ENCODE measurements at regions of chr12 and their contacts with region 1.

Region 1: GRCh38 chr12:81644503-81644902 is 114.6 kb downstream of the PPFIA2 start:
- DNase-seq: no peak
- ATAC-seq: peak; percentile 73
- H3K4me3 ChIP-seq: no peak overlapping the region
- H3K27ac ChIP-seq: no peak overlapping the region
- H3K4me1 ChIP-seq: no peaks in the 10 kb centered on the region
- H3K27me3 ChIP-seq: no peaks in the 10 kb centered on the region

Region 2: DNA sequence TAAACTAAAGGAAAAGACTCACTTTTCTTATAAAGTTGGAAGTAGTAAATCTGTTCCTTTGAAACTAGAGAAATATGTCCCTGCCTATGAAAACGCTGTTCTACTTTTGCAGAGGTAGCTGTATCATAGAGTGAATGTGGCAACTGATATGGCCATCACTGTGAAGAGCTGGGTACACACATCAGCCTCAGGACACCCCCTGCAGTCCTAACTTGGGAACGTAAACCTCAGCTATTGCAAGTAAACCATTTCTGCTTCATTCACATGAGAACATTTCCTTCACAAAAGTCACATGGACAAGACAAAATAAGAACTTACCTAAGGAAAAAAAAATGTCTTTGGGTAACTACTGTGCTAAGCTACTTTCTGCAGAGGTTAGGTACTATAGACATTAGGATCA is 348.0 kb after region 1 on chr12:
- intact Hi-C with region 1: loop called in 1 of 2 experiments (anchors 5 kb)
- DNase-seq: no peak
- ATAC-seq: no peak
- H3K4me3 ChIP-seq: no peak overlapping the region
- H3K27ac ChIP-seq: no peak overlapping the region
- H3K4me1 ChIP-seq: no peaks in the 10 kb centered on the region
- H3K27me3 ChIP-seq: no peaks in the 10 kb centered on the region

Region 3: GRCh38 chr12:82027612-82028011 is 383.1 kb after region 1 on chr12:
- intact Hi-C with region 1: loop called in 1 of 2 experiments (anchors 10 kb)
- DNase-seq: no peak
- ATAC-seq: no peak
- H3K4me3 ChIP-seq: no peak overlapping the region
- H3K27ac ChIP-seq: no peak overlapping the region
- H3K4me1 ChIP-seq: no peaks in the 10 kb centered on the region
- H3K27me3 ChIP-seq: no peaks in the 10 kb centered on the region

Region 4: DNA sequence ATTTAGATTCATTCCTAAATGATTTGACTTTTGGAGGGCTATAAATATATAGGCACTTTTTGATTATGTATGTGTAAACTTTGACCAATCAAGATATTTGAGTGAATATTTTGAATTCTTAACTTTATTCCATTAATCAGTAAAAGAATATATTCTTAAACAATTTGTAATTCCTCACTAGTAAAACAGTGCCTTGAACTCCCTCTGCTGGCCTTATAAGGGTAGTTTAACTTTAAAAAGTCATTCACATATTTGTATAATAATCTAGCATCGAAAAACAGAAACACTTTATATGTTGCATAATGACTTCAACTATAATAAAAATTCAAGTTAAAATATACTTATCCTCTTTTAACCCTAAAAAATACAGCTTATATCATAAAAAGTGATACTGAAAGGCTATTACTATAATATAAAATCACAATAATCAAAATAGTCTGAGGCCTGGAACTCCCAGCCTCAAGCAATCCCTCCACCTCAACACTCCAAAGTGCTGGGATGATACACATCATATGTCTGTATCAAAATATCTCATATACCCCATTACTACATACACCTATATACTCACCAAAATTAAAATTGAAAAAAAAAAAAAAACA is 682.5 kb after region 1 on chr12:
- intact Hi-C with region 1: loop called (anchors 2 to 5 kb)
- DNase-seq: no peak
- ATAC-seq: no peak
- H3K4me3 ChIP-seq: no peak overlapping the region
- H3K27ac ChIP-seq: no peak overlapping the region
- H3K4me1 ChIP-seq: no peaks in the 10 kb centered on the region
- H3K27me3 ChIP-seq: no peaks in the 10 kb centered on the region

Measured in aorta (tissue), 5 donors.